Stomach (tissue), 19 donors: ENCODE measurements at regions of chr1 and their contacts with region 1.

Region 1: GRCh38 chr1:147515046-147515869 is 26.0 kb upstream of the BCL9 start:
- DNase-seq: peak; percentile 31 to 89
- H3K4me3 ChIP-seq: no peak overlapping the region
- H3K27ac ChIP-seq: peak overlapping the region in 2 of 5 donors; percentile 29 to 39
- H3K4me1 ChIP-seq: peaks cover 0 to 8% (median 4%) of the 10 kb centered on the region in 4 donors
- H3K27me3 ChIP-seq: no peaks in the 10 kb centered on the region
- CTCF ChIP-seq: peak in 2 of 7 experiments; percentile 18 to 70
- EP300 ChIP-seq: no peak
- POLR2A ChIP-seq: no peak

Region 2: GRCh38 chr1:147377263-147378246 is 137.7 kb before region 1 on chr1:
- intact Hi-C with region 1: no loop called
- DNase-seq: no peak
- H3K4me3 ChIP-seq: no peak overlapping the region
- H3K27ac ChIP-seq: no peak overlapping the region
- H3K4me1 ChIP-seq: no peaks in the 10 kb centered on the region
- H3K27me3 ChIP-seq: no peaks in the 10 kb centered on the region
- CTCF ChIP-seq: no peak
- EP300 ChIP-seq: no peak
- POLR2A ChIP-seq: no peak

Region 3: DNA sequence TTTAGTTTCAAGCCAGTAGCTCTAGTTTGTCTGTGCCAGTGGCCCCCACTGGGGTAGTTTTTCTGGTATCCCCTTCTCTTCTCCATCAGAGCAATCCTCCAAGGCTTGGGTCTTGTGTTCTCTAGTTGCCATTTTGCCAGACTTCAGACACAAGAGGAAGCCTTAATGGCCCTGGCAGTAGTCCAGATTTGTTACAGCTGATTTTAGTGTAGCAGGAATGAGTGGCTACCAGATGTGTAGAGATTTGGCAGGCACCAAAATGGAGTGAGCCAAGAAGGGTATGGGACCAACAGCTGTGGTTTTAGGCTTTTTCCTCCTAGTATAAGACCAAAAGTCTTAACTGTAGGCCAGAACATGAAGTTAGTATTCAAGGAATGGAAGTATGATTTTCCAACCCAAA is 98.2 kb after region 1 on chr1:
- intact Hi-C with region 1: no loop called
- DNase-seq: no peak
- H3K4me3 ChIP-seq: no peak overlapping the region
- H3K27ac ChIP-seq: no peak overlapping the region
- H3K4me1 ChIP-seq: peaks cover 0 to 26% (median 5%) of the 10 kb centered on the region in 4 donors
- H3K27me3 ChIP-seq: no peaks in the 10 kb centered on the region
- CTCF ChIP-seq: no peak
- EP300 ChIP-seq: no peak
- POLR2A ChIP-seq: no peak

Region 4: GRCh38 chr1:147627435-147628110 is 112.3 kb after region 1 on chr1:
- intact Hi-C with region 1: loop called (anchors 10 kb)
- DNase-seq: peak; percentile 59 to 75
- H3K4me3 ChIP-seq: no peak overlapping the region
- H3K27ac ChIP-seq: no peak overlapping the region
- H3K4me1 ChIP-seq: peaks cover 0 to 28% (median 8%) of the 10 kb centered on the region in 4 donors
- H3K27me3 ChIP-seq: no peaks in the 10 kb centered on the region
- CTCF ChIP-seq: peak in 5 of 7 experiments; percentile 41 to 92 (median 90)
- EP300 ChIP-seq: no peak
- POLR2A ChIP-seq: no peak